AG04450 (cell line): ENCODE measurements at regions of chr11 and their contacts with region 1.

Region 1: GRCh38 chr11:119728651-119729580 is at the start of gene NECTIN1:
- DNase-seq: peak; percentile 55
- H3K4me3 ChIP-seq: peak within 1 kb of the TSS; percentile 72
- H3K27ac ChIP-seq: peak within 1 kb of the TSS; percentile 39
- H3K27me3 ChIP-seq: peaks cover 6% of the 10 kb centered on the region
- CTCF ChIP-seq: peak; percentile 77
- polyA plus RNA-seq, gene NECTIN1: 2.8 and 4.5 TPM in 2 replicates

Region 2: GRCh38 chr11:119641983-119642745 is 86.8 kb before region 1 on chr11:
- CTCF ChIA-PET with region 1: interaction called, 11 read pairs
- POLR2A ChIA-PET with region 1: no interaction called
- DNase-seq: no peak
- H3K4me3 ChIP-seq: no peak overlapping the region
- H3K27ac ChIP-seq: no peak overlapping the region
- H3K27me3 ChIP-seq: peaks cover 51% of the 10 kb centered on the region
- CTCF ChIP-seq: peak; percentile 49

Region 3: DNA sequence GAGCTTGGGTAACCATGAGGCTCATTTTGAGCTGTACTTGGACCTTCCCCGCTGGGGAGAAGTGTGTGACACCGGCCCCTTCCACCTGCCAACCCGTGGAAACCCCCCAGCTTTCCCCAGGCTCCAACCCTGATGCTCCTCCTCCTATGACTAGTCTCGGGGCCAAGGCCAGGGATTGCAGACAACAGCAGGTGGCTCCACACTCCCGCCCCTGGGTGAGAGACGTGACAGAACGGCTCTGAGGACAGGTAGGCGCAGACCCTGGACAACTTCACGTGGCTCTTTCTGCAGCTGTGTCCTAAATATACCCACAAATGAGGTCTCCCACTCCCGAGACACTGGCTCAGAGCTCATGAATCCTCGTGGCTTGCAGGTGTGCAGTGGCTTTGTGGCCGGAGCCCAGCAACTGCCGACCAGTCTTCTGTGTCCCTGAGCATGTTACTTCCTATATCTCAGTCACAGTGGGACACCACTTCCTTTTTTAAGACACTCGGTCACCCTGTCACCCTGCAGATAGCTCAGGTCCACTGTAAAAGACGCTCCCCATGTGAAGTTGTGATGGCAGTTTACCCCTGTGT is 55.1 kb before region 1 on chr11:
- CTCF ChIA-PET with region 1: interaction called, 33 read pairs
- POLR2A ChIA-PET with region 1: interaction called, 8 read pairs
- DNase-seq: no peak
- H3K4me3 ChIP-seq: no peak overlapping the region
- H3K27ac ChIP-seq: no peak overlapping the region
- H3K27me3 ChIP-seq: no peaks in the 10 kb centered on the region
- CTCF ChIP-seq: no peak

Region 4: DNA sequence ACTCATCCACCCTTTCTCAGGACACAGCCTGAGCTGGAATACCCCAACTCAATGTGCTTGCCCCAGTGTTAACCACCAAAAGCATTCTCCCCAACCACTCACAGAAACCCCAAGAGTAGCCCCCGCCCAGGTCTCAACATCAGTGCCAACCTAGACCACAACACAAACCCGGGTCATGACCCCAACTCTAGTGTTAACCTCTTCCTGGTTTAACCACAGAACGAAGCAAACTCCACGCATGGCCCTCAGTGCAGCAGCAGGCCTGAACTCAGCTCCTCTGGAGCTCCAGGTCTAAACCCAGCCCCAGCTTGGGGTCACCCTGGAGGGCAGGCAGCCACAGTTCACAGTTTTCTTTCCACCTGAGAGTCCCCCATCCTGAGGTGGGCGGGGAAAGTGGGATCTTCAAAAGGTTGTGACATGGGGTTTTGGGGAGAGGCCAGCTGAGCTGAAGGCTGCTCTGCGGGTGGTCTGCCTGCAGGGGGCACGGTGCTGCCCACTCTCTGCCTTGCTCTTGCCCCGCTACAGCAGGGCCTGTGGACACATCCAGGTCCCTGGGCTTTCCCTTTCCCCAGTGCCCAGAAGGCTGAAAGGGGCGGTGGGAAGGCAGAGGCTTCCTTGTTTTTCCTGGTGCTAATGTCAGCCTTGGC is 37.8 kb before region 1 on chr11:
- CTCF ChIA-PET with region 1: interaction called, 14 read pairs
- POLR2A ChIA-PET with region 1: no interaction called
- DNase-seq: no peak
- H3K4me3 ChIP-seq: no peak overlapping the region
- H3K27ac ChIP-seq: no peak overlapping the region
- H3K27me3 ChIP-seq: no peaks in the 10 kb centered on the region
- CTCF ChIP-seq: peak; percentile 15; the same call in 1 of the 2 replicates

Region 5: GRCh38 chr11:119739021-119739703 is 10.2 kb after region 1 on chr11:
- CTCF ChIA-PET with region 1: interaction called, 16 read pairs
- POLR2A ChIA-PET with region 1: no interaction called
- DNase-seq: no peak
- H3K4me3 ChIP-seq: no peak overlapping the region
- H3K27ac ChIP-seq: no peak overlapping the region
- H3K27me3 ChIP-seq: peaks cover 48% of the 10 kb centered on the region
- CTCF ChIP-seq: no peak